ENCODE measurements at regions of chr1 and their contacts with region 1.

Region 1: GRCh38 chr1:156282479-156283222 is at the start of gene SMG5:
- DNase-seq: peak; percentile 97
- H3K4me3 Mint-ChIP-seq: peak within 1 kb of the TSS; percentile 86
- H3K27ac Mint-ChIP-seq: peak within 1 kb of the TSS; percentile 81
- H3K4me1 Mint-ChIP-seq: peaks cover 39% of the 10 kb centered on the region
- H3K27me3 Mint-ChIP-seq: no peaks in the 10 kb centered on the region
- total RNA-seq, gene SMG5: 58.5 to 60.4 TPM

Region 2: DNA sequence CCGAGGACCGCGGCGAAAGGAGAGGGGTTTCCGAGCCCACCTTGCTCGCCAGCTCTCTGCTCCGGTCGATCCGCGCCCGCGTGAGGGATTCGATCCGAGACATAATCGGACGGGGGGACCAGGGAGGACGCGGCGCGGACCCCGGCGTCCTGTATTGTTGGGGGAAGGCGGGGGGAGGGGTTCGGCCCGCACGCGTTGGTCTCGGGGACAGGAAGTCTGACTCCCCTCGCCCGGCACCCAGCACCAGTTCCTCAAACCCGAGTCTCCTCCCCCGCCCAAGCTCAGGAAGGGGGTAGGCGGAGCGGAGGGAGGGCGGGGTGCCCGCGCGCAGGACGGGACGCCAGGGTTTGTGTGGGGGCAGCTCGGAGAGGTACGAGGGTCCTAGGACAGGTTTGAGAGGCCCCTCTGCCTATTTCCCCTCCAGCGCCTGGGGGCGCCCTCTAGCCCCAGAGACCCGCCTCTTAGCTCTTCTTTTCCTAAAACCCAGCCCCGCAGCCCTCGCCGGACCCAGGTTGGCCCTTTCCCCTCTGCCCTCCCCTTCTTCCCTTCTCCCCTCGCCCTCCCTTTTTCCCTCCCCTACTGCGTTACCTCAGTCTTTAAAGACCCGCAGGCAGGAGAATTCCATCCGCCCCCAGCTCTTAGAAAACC is 304.2 kb before region 1 on chr1 and contains the start of gene ARHGEF2:
- CTCF ChIA-PET with region 1: interaction called, 3 read pairs
- POLR2A ChIA-PET with region 1: interaction called, 10 read pairs
- DNase-seq: peak; percentile 84
- H3K4me3 Mint-ChIP-seq: peak within 1 kb of the TSS; percentile 100
- H3K27ac Mint-ChIP-seq: peak within 1 kb of the TSS; percentile 93
- H3K4me1 Mint-ChIP-seq: peaks cover 60% of the 10 kb centered on the region
- H3K27me3 Mint-ChIP-seq: no peaks in the 10 kb centered on the region
- total RNA-seq, gene ARHGEF2: 159 to 164 TPM

Region 3: DNA sequence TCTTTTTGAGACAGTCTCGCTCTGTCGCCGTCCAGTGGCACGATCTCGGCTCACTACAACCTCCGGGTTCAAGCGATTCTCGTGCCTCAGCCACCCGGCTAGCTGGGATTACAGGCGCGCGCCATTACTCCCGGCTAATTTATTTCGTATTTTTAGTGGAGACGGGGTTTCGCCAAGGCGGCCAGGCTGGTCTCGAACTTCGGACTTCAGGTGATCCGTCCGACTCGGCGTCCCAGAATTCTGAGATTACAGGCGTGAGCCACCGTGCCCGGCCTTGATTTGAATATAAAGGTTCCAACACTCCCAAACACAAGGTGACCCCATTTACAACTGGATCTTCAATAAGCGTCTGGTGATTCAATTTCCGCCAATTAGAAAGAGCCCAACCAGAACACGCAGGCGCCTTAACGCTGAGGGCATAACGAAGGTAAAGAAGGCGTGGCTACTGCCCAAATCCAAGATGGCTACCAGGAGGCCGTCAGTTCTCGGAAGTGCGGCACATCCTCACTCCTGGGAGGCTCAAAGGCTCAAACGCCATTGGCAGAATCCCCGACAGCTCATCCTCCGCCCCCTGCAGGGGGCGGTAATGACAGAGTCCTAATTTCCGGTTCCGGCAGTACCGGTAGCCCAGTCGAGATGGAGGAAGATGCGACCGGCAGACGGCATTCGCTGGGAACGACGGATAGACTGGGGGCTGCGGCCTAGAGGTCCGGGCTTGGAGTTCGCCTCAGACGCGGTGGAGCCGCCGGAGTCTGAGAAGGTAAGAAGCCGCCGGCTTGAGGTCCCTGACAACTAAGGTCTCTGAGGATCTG is 89.0 kb before region 1 on chr1 and contains the start of gene SLC25A44:
- CTCF ChIA-PET with region 1: no interaction called
- POLR2A ChIA-PET with region 1: interaction called, 18 read pairs
- DNase-seq: peak; percentile 98
- H3K4me3 Mint-ChIP-seq: peak within 1 kb of the TSS; percentile 85
- H3K27ac Mint-ChIP-seq: peak within 1 kb of the TSS; percentile 73
- H3K4me1 Mint-ChIP-seq: peaks cover 59% of the 10 kb centered on the region
- H3K27me3 Mint-ChIP-seq: no peaks in the 10 kb centered on the region
- total RNA-seq, gene SLC25A44: 27.7 to 36.3 TPM

Region 4: DNA sequence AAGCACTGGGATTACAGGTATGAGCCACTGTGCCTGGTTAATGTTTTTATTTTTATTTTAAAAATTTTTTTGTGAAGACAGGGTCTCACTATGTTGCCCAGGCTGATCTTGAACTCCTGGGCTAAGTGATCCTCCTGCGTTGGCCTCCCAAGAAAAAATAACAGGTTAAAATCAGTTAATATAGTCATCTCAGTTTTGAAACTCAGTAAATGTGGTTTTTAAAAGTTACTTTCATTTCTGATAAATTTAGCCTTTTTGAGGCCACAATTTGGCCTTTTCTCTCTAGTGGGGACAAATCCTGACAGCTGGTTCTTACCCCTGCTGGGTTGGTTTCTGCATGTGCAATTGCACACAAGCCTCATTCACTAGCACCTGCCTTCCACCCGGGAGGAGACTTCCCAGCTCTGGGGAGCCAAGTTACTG is 56.5 kb before region 1 on chr1:
- CTCF ChIA-PET with region 1: interaction called, 15 read pairs
- POLR2A ChIA-PET with region 1: interaction called, 4 read pairs
- DNase-seq: no peak
- H3K4me3 Mint-ChIP-seq: no peak overlapping the region
- H3K27ac Mint-ChIP-seq: peak overlapping the region; percentile 84
- H3K4me1 Mint-ChIP-seq: peaks cover 58% of the 10 kb centered on the region
- H3K27me3 Mint-ChIP-seq: no peaks in the 10 kb centered on the region

Region 5: GRCh38 chr1:156251527-156251926 is 31.1 kb before region 1 on chr1:
- CTCF ChIA-PET with region 1: no interaction called
- POLR2A ChIA-PET with region 1: interaction called, 13 read pairs
- DNase-seq: no peak
- H3K4me3 Mint-ChIP-seq: no peak overlapping the region
- H3K27ac Mint-ChIP-seq: peak overlapping the region; percentile 64
- H3K4me1 Mint-ChIP-seq: peaks cover 25% of the 10 kb centered on the region
- H3K27me3 Mint-ChIP-seq: no peaks in the 10 kb centered on the region

Region 6: GRCh38 chr1:156295391-156295947 is 12.8 kb after region 1 on chr1 and contains the start of gene GLMP:
- CTCF ChIA-PET with region 1: interaction called, 10 read pairs
- POLR2A ChIA-PET with region 1: interaction called, 67 read pairs
- DNase-seq: peak; percentile 74
- H3K4me3 Mint-ChIP-seq: peak within 1 kb of the TSS; percentile 88
- H3K27ac Mint-ChIP-seq: peak within 1 kb of the TSS; percentile 77
- H3K4me1 Mint-ChIP-seq: peaks cover 19% of the 10 kb centered on the region
- H3K27me3 Mint-ChIP-seq: no peaks in the 10 kb centered on the region
- total RNA-seq, gene GLMP: 36.8 to 39.4 TPM

Region 7: DNA sequence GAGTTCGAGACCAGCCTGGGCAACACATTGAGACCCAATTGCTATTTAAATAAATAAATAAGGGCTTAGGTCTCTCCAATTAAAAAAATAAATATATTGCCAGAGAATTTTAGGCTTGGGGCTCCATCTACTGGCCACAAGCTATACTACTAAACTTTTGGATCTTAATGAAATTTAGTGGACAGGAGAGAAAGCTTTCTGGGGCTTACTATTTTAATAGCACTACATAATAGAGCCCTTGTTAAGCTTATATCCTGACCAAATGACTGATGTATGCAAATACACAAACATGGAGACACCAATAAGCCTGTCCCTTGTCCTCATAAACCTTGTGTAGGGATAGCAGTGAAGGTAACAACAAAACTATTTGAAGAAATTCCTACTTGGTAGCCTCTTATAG is 37.0 kb after region 1 on chr1:
- CTCF ChIA-PET with region 1: interaction called, 9 read pairs
- POLR2A ChIA-PET with region 1: interaction called, 10 read pairs
- DNase-seq: peak; percentile 27
- H3K4me3 Mint-ChIP-seq: no peak overlapping the region
- H3K27ac Mint-ChIP-seq: no peak overlapping the region
- H3K4me1 Mint-ChIP-seq: no peaks in the 10 kb centered on the region
- H3K27me3 Mint-ChIP-seq: no peaks in the 10 kb centered on the region

Region 8: GRCh38 chr1:156407344-156407743 is 124.7 kb after region 1 on chr1:
- CTCF ChIA-PET with region 1: no interaction called
- POLR2A ChIA-PET with region 1: no interaction called
- DNase-seq: no peak
- H3K4me3 Mint-ChIP-seq: no peak overlapping the region
- H3K27ac Mint-ChIP-seq: no peak overlapping the region
- H3K4me1 Mint-ChIP-seq: no peaks in the 10 kb centered on the region
- H3K27me3 Mint-ChIP-seq: peaks cover 36% of the 10 kb centered on the region

Measured in activated CD4-positive, alpha-beta memory T cell treated with anti-CD3 and anti-CD28 coated beads, Interleukin-2, amount 10 ng/mL, durations not matched to agents 7 days and 5 days (primary cell).